ENCODE measurements at regions of chr5 and their contacts with region 1.

Region 1: GRCh38 chr5:172006321-172007174 is at the start of gene FBXW11:
- DNase-seq: peak; percentile 95
- H3K4me3 Mint-ChIP-seq: peak within 1 kb of the TSS; percentile 90
- H3K27ac Mint-ChIP-seq: peak within 1 kb of the TSS; percentile 94
- H3K4me1 Mint-ChIP-seq: peaks cover 50% of the 10 kb centered on the region
- H3K27me3 Mint-ChIP-seq: no peaks in the 10 kb centered on the region
- total RNA-seq, gene FBXW11: 37.4 to 38.8 TPM

Region 2: GRCh38 chr5:171387345-171387969 is 619.1 kb before region 1 on chr5 and contains the start of gene NPM1:
- CTCF ChIA-PET with region 1: interaction called, 3 read pairs
- POLR2A ChIA-PET with region 1: interaction called, 15 read pairs
- DNase-seq: peak; percentile 97
- H3K4me3 Mint-ChIP-seq: peak within 1 kb of the TSS; percentile 99
- H3K27ac Mint-ChIP-seq: peak within 1 kb of the TSS; percentile 98
- H3K4me1 Mint-ChIP-seq: peaks cover 53% of the 10 kb centered on the region
- H3K27me3 Mint-ChIP-seq: peaks cover 2% of the 10 kb centered on the region
- total RNA-seq, gene NPM1: 1,119 to 1,157 TPM

Region 3: GRCh38 chr5:171957591-171958251 is 48.8 kb before region 1 on chr5:
- CTCF ChIA-PET with region 1: interaction called, 4 read pairs
- POLR2A ChIA-PET with region 1: interaction called, 11 read pairs
- DNase-seq: peak; percentile 16
- H3K4me3 Mint-ChIP-seq: no peak overlapping the region
- H3K27ac Mint-ChIP-seq: peak overlapping the region; percentile 57
- H3K4me1 Mint-ChIP-seq: peaks cover 33% of the 10 kb centered on the region
- H3K27me3 Mint-ChIP-seq: no peaks in the 10 kb centered on the region

Region 4: DNA sequence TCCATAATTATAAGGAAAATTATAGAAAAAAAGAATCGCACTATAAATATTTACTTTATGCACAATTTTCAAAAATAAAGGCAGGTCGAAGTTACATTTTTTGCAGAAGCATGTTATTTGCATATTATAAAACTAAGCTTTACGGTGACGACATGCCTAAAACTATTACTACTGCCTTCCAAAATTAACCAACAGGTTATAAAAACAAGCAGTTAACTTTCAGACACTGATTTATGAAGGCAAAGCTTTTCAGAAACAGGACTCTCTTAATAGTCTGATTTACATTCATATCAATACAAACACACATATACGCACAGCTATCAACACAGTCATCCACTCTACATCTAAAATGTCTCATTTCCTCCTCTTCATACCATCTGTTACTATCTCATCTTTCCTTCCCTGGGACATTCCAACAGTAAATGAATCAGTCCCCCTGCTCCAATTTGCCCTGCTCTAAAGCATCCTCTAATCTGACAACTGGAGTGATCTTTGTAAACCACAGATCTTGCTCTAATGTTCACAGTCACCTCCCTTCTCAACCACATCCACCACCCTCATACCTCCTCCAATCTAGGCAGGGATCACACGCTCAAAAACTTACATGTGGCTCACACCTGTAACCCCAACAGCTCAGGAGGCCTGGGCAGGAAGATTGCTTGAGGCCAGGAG is 21.7 kb before region 1 on chr5:
- CTCF ChIA-PET with region 1: interaction called, 4 read pairs
- POLR2A ChIA-PET with region 1: interaction called, 44 read pairs
- DNase-seq: peak; percentile 57
- H3K4me3 Mint-ChIP-seq: no peak overlapping the region
- H3K27ac Mint-ChIP-seq: no peak overlapping the region
- H3K4me1 Mint-ChIP-seq: peaks cover 33% of the 10 kb centered on the region
- H3K27me3 Mint-ChIP-seq: no peaks in the 10 kb centered on the region

Region 5: GRCh38 chr5:172059661-172060100 is 53.1 kb after region 1 on chr5:
- CTCF ChIA-PET with region 1: interaction called, 14 read pairs
- POLR2A ChIA-PET with region 1: interaction called, 8 read pairs
- DNase-seq: no peak
- H3K4me3 Mint-ChIP-seq: no peak overlapping the region
- H3K27ac Mint-ChIP-seq: peak overlapping the region; percentile 27
- H3K4me1 Mint-ChIP-seq: peaks cover 16% of the 10 kb centered on the region
- H3K27me3 Mint-ChIP-seq: no peaks in the 10 kb centered on the region

Region 6: GRCh38 chr5:172123269-172123692 is 116.7 kb after region 1 on chr5:
- CTCF ChIA-PET with region 1: no interaction called
- POLR2A ChIA-PET with region 1: no interaction called
- DNase-seq: no peak
- H3K4me3 Mint-ChIP-seq: no peak overlapping the region
- H3K27ac Mint-ChIP-seq: peak overlapping the region; percentile 48
- H3K4me1 Mint-ChIP-seq: peaks cover 47% of the 10 kb centered on the region
- H3K27me3 Mint-ChIP-seq: no peaks in the 10 kb centered on the region

Region 7: DNA sequence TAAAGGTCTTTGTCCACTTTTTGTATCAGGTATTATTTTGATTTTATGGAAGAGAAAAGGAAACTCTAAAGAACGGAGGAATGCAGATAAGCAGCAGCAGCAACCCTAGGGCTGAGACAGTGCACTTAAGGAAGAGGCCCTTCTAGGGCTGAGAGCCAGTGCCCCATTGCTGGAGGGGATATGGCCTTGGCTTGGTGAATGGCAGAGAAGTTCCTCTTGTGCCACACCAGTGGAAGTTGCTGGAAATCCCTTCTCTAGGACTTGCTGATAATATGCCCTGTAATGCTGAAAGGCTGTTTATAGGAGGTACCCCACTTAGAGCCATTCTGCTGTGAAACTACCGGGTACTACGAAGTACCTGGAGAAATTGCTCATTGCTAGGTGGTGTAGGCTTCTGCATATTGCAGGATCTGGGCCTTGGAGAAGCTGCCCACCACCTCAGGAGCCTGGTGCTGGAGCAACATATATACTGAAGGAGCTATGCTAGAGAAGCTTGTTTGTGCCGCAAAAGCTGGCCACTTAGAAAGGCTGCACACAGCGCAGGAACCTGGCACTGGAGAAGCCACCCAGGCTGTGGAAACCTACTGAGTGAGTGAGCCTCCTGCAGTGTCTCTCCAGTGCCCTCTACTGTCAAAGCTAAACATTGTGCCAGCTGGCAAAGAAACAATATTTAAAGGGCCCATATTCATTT is 286.7 kb after region 1 on chr5:
- CTCF ChIA-PET with region 1: interaction called, 16 read pairs
- POLR2A ChIA-PET with region 1: no interaction called
- DNase-seq: peak; percentile 70
- H3K4me3 Mint-ChIP-seq: no peak overlapping the region
- H3K27ac Mint-ChIP-seq: no peak overlapping the region
- H3K4me1 Mint-ChIP-seq: peaks cover 2% of the 10 kb centered on the region
- H3K27me3 Mint-ChIP-seq: peaks cover 11% of the 10 kb centered on the region

Measured in activated CD4-positive, alpha-beta memory T cell treated with anti-CD3 and anti-CD28 coated beads, Interleukin-2, amount 10 ng/mL, durations not matched to agents 7 days and 5 days (primary cell).